HEK293 (cell line): ENCODE measurements at regions of chr19 and their contacts with region 1.

Region 1: DNA sequence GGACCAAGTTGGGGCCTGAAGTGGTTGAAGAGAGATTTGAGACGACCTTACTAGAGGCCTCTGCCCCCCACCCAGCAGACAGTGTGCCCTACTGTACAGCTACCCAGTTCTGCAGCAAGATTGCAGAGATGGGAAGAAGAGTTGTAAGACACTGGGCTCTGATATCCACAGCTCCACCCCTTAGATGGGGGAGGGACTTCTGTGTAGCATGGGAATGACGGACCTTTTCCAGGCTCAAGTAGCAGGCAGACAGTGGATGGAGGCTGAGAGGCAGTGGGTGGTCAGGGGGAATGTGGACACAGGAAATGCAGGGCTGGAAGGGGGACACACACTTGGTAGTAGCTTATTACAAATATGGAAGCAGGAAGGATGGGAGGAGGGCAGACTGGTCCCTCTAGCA is 13.0 kb downstream of the LRFN3 start:
- H3K4me3 ChIP-seq: no peak overlapping the region
- H3K27ac ChIP-seq: no peak overlapping the region
- H3K4me1 ChIP-seq: no peaks in the 10 kb centered on the region
- CTCF ChIP-seq: no peak

Region 2: GRCh38 chr19:35959040-35959967 is 10.2 kb after region 1 on chr19:
- CTCF ChIA-PET with region 1: interaction called, 10 read pairs
- POLR2A ChIA-PET with region 1: interaction called, 6 read pairs
- H3K4me3 ChIP-seq: no peak overlapping the region
- H3K27ac ChIP-seq: no peak overlapping the region; the same call in 1 of the 2 replicates
- H3K4me1 ChIP-seq: peaks cover 8% of the 10 kb centered on the region
- CTCF ChIP-seq: peak; percentile 50; the same call in 1 of the 2 replicates

Region 3: GRCh38 chr19:35995048-35995993 is 46.2 kb after region 1 on chr19 and contains the start of gene SDHAF1:
- CTCF ChIA-PET with region 1: interaction called, 11 read pairs
- POLR2A ChIA-PET with region 1: no interaction called
- H3K4me3 ChIP-seq: peak within 1 kb of the TSS; percentile 47
- H3K27ac ChIP-seq: peak within 1 kb of the TSS; percentile 84
- H3K4me1 ChIP-seq: peaks cover 21% of the 10 kb centered on the region
- CTCF ChIP-seq: no peak; the same call in 1 of the 2 replicates